ENCODE measurements at regions of chr1 and their contacts with region 1.

Region 1: DNA sequence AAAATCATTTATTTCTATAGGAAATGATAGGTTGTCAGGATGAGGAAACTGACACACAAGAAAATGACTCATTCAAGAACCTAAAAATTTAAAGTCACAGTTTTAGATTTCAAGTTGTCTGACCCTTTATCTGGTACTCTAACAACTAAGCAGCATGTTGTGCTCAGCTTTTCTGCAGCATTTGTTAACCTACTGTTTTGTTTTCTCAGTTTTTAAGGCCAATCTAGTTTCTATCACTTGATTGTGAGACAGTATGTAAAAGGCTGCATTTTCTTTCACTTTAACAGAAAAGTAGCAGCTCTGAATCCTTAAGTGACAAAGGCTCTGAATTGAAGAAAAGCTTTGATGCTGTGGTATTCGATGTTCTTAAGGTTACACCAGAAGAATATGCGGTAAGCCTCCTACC is 59.1 kb downstream of the RALGPS2 start:
- DNase-seq: no peak
- H3K4me3 ChIP-seq: no peak overlapping the region
- H3K27ac ChIP-seq: no peak overlapping the region
- H3K4me1 ChIP-seq: no peaks in the 10 kb centered on the region; the same call in 1 of the 2 replicates
- H3K27me3 ChIP-seq: no peaks in the 10 kb centered on the region
- CTCF ChIP-seq: no peak

Region 2: DNA sequence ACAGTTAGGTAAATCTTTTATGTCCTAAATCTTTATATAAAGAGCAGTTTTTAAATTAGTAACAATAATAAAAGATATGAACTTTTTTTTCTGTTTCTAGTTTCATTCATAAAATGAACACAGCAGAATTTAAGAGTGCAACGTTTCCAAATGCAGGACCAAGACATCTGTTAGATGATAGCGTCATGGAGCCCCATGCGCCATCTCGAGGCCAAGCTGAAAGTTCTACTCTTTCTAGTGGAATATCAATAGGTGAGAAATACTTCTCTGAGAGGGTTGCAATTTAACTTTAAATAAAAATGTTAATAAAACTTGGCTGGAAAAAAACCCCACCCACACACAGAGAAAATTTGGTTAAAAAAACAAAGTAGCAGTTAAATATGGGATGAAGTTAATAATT is 101.7 kb after region 1 on chr1:
- CTCF ChIA-PET with region 1: no interaction called
- POLR2A ChIA-PET with region 1: interaction called, 10 read pairs
- intact Hi-C with region 1: no loop called
- DNase-seq: no peak
- H3K4me3 ChIP-seq: no peak overlapping the region
- H3K27ac ChIP-seq: no peak overlapping the region
- H3K4me1 ChIP-seq: no peaks in the 10 kb centered on the region
- H3K27me3 ChIP-seq: no peaks in the 10 kb centered on the region
- CTCF ChIP-seq: no peak